Activated CD8-positive, alpha-beta T cell treated with anti-CD3 and anti-CD28 coated beads, Interleukin-2, amount 10 ng/mL, durations not matched to agents 7 days and 5 days (primary cell): ENCODE measurements at regions of chr22 and their contacts with region 1.

Region 1: GRCh38 chr22:41857155-41857859 is 24.4 kb downstream of the SREBF2 start:
- DNase-seq: peak; percentile 79
- ATAC-seq: peak; percentile 71
- H3K4me3 Mint-ChIP-seq: peak overlapping the region; percentile 12
- H3K27ac Mint-ChIP-seq: peak overlapping the region; percentile 31
- H3K4me1 Mint-ChIP-seq: peaks cover 61% of the 10 kb centered on the region
- H3K27me3 Mint-ChIP-seq: no peaks in the 10 kb centered on the region

Region 2: GRCh38 chr22:41746567-41747400 is 110.5 kb before region 1 on chr22:
- CTCF ChIA-PET with region 1: interaction called, 30 read pairs
- POLR2A ChIA-PET with region 1: no interaction called
- DNase-seq: peak; percentile 63
- ATAC-seq: peak; percentile 90
- H3K4me3 Mint-ChIP-seq: no peak overlapping the region
- H3K27ac Mint-ChIP-seq: no peak overlapping the region
- H3K4me1 Mint-ChIP-seq: no peaks in the 10 kb centered on the region
- H3K27me3 Mint-ChIP-seq: peaks cover 30% of the 10 kb centered on the region

Region 3: DNA sequence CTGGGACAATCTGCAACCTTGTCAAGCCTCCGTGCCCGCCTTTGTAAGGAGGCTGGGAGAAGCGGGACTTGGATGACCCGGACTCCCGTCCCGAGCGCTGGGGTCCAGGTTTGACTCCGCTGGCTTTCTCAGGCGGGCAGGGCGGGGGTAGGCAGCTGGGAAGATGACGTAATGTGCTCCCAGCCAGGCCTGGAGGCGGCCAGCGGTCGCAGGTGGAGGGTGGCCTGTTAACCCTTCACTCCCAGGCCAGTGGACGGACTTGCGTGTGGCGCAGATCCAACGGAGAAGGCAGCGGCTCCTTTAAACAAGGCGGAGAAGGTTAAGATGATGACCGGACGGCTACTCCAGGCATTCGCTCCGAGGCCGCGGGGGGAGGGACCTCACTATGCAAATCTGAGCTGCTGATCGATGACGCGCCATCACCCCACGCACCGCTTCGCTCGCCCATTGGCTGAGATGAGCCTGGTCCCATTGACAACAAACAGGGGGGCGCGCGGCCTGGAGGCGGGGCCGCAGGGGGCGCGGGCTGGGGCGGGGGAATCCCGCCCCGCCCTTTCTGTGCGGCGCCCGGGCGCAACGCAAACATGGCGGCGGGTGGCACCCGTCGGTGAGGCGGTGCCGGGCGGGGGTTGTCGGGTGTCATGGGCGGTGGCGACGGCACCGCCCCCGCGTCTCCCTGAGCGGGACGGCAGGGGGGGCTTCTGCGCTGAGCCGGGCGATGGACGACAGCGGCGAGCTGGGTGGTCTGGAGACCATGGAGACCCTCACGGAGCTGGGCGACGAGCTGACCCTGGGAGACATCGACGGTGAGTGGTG is 24.5 kb before region 1 on chr22 and contains the start of gene SREBF2:
- CTCF ChIA-PET with region 1: interaction called, 13 read pairs
- POLR2A ChIA-PET with region 1: interaction called, 8 read pairs
- DNase-seq: peak; percentile 100
- ATAC-seq: peak; percentile 95
- H3K4me3 Mint-ChIP-seq: peak within 1 kb of the TSS; percentile 95
- H3K27ac Mint-ChIP-seq: peak within 1 kb of the TSS; percentile 100
- H3K4me1 Mint-ChIP-seq: peaks cover 41% of the 10 kb centered on the region
- H3K27me3 Mint-ChIP-seq: no peaks in the 10 kb centered on the region
- total RNA-seq, gene SREBF2: 93.0 to 93.7 TPM

Region 4: GRCh38 chr22:41841085-41841659 is 16.1 kb before region 1 on chr22:
- CTCF ChIA-PET with region 1: interaction called, 36 read pairs
- POLR2A ChIA-PET with region 1: interaction called, 4 read pairs
- DNase-seq: no peak
- ATAC-seq: no peak
- H3K4me3 Mint-ChIP-seq: no peak overlapping the region
- H3K27ac Mint-ChIP-seq: no peak overlapping the region
- H3K4me1 Mint-ChIP-seq: peaks cover 48% of the 10 kb centered on the region
- H3K27me3 Mint-ChIP-seq: no peaks in the 10 kb centered on the region

Region 5: DNA sequence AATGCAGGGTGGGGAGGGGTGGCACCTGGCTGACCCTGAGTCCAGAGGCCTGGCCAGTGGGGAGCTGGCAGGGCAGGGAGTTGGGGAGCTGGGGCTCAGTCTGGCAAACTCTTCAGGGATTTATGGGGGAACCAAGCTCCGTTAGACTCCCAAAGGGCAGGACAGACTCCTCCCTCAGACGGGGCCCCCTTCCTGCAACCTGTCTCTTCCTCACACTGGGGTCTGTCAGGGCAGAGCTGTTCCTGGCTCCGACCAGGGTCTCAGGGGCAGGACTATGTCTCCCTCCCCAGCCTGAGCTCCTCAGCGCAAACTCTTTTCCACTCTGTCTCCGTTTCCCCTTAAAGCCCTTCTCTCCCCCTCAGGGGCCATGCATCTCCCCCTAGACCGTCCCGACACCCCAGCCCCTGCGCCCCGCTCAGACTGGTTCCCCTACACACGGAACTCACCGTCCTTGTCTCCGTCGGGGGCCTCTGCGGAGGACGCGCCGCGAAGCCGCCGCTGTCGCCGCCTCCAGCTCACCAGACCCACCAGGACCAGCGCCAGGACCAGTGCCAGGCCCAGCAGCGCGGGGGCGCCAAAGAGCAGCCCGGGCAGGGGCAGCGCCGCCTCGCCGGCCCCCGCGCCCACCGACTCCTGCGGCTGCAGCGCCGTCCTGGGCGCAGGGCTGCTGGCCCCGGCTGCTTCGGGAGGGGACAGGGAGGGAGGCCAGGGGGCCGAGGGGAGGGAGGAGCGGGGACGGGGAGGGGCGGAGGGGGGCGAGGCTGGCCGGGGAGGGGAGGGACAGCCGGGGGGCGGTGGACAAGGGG is 68.6 kb after region 1 on chr22:
- CTCF ChIA-PET with region 1: interaction called, 16 read pairs
- POLR2A ChIA-PET with region 1: no interaction called
- DNase-seq: peak; percentile 78
- ATAC-seq: peak; percentile 88
- H3K4me3 Mint-ChIP-seq: peak overlapping the region; percentile 54
- H3K27ac Mint-ChIP-seq: no peak overlapping the region
- H3K4me1 Mint-ChIP-seq: peaks cover 8% of the 10 kb centered on the region
- H3K27me3 Mint-ChIP-seq: peaks cover 10% of the 10 kb centered on the region